WTC11 (cell line): ENCODE measurements at regions of chr1 and their contacts with region 1.

Region 1: GRCh38 chr1:206725109-206725963 is 40.6 kb downstream of the MAPKAPK2 start:
- DNase-seq: peak; percentile 67
- ATAC-seq: peak; percentile 26
- H3K4me3 Mint-ChIP-seq: no peak overlapping the region
- H3K27ac Mint-ChIP-seq: no peak overlapping the region; the same call in 1 of the 2 replicates
- H3K4me1 Mint-ChIP-seq: peaks cover 26% of the 10 kb centered on the region
- H3K27me3 Mint-ChIP-seq: no peaks in the 10 kb centered on the region
- CTCF ChIP-seq: peak; percentile 46; the same call in 1 of the 2 replicates

Region 2: DNA sequence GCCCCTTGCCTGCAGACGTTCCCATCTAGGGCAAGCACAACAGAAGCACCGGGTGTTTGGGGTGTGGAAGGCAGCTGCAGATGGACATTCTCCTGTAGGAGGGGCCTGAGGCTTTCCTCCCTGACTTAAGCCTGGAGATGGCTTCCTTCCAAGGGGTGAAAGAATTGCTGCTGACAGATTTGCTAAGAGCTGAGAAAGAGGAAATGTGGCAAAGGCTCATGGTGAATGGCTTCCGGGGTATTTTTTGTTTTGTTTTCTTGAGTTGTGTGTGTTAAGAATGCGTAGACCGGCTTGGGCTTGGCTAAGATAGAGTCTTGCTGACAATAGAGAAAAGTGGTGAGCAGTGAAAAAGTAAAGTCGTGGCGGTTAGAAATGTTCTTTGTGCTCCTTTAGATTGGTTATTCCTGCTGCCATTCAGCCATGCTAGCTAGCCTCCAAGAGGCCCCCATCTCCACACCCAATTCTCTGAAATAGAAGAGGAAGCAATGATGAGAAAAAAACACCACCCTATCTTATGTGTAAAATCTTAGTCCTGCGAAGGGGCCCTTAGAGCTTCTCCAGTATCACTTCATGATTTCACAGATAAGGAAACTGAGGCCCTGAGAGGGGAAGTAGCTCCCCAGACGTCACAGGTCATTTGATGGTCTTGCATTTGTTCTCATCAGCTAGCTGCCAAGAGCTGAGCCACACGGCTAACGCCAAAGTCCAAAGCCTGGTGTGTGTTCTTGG is 150.0 kb before region 1 on chr1:
- CTCF ChIA-PET with region 1: no interaction called
- POLR2A ChIA-PET with region 1: no interaction called
- DNase-seq: no peak
- ATAC-seq: no peak; the same call in 1 of the 2 replicates
- H3K4me3 Mint-ChIP-seq: no peak overlapping the region
- H3K27ac Mint-ChIP-seq: peak overlapping the region; percentile 28; the same call in 1 of the 2 replicates
- H3K4me1 Mint-ChIP-seq: peaks cover 6% of the 10 kb centered on the region; the same call in 1 of the 2 replicates
- H3K27me3 Mint-ChIP-seq: no peaks in the 10 kb centered on the region
- CTCF ChIP-seq: no peak

Region 3: DNA sequence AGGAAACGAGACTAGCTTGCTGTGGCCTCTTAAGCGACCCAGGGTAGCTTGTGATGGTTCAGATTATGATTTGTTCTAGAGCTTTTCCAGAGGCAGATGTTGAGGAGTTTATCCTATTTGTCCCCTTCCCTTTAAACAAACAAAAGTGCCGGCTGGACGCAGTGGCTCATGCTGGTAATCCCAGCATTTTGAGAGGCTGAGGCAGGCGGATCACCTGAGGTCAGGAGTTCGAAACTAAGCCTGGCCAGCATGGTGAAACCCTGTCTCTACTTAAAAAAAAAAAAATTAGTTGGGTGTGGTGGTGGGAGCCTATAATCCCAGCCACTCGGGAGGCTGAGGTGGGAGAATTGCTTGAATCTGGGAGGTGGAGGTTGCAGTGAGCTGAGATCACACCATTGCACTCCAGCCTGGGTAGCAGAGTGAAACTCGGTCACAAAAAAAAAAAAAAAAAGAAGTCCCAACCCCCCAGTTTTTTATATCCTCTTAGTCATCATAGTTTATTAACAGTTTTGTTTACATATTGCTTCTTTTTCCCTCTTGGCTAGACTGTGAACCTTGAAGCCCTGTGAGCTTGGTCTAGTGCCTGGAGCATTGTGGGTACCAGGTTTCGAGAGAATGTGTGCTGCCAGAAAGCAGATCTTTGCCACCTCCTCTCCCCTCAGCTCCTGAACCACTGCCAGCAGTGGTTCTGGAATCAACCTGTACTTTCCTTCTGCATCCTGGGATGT is 10.8 kb before region 1 on chr1:
- CTCF ChIA-PET with region 1: interaction called, 11 read pairs
- POLR2A ChIA-PET with region 1: no interaction called
- DNase-seq: no peak
- ATAC-seq: no peak
- H3K4me3 Mint-ChIP-seq: no peak overlapping the region
- H3K27ac Mint-ChIP-seq: no peak overlapping the region
- H3K4me1 Mint-ChIP-seq: peaks cover 14% of the 10 kb centered on the region
- H3K27me3 Mint-ChIP-seq: no peaks in the 10 kb centered on the region
- CTCF ChIP-seq: no peak